MCF 10A (cell line): ENCODE measurements at regions of chr11 and their contacts with region 1.

Region 1: GRCh38 chr11:78645226-78646202 is 70.8 kb upstream of the NARS2 start:
- DNase-seq: peak; percentile 80
- H3K4me3 Mint-ChIP-seq: peak overlapping the region; percentile 52
- H3K27ac Mint-ChIP-seq: no peak overlapping the region
- H3K4me1 Mint-ChIP-seq: peaks cover 8% of the 10 kb centered on the region
- H3K27me3 Mint-ChIP-seq: peaks cover 12% of the 10 kb centered on the region
- CTCF ChIP-seq: peak; percentile 97

Region 2: GRCh38 chr11:78460471-78460870 is 185.0 kb before region 1 on chr11:
- CTCF ChIA-PET with region 1: no interaction called
- POLR2A ChIA-PET with region 1: no interaction called
- intact Hi-C with region 1: no loop called
- DNase-seq: no peak
- H3K4me3 Mint-ChIP-seq: no peak overlapping the region
- H3K27ac Mint-ChIP-seq: no peak overlapping the region
- H3K4me1 Mint-ChIP-seq: no peaks in the 10 kb centered on the region
- H3K27me3 Mint-ChIP-seq: no peaks in the 10 kb centered on the region
- CTCF ChIP-seq: no peak

Region 3: GRCh38 chr11:78715639-78716311 is 70.3 kb after region 1 on chr11:
- CTCF ChIA-PET with region 1: interaction called, 166 read pairs
- POLR2A ChIA-PET with region 1: interaction called, 8 read pairs
- intact Hi-C with region 1: loop called (anchors 1 kb)
- DNase-seq: peak; percentile 78
- H3K4me3 Mint-ChIP-seq: no peak overlapping the region
- H3K27ac Mint-ChIP-seq: no peak overlapping the region
- H3K4me1 Mint-ChIP-seq: peaks cover 12% of the 10 kb centered on the region
- H3K27me3 Mint-ChIP-seq: no peaks in the 10 kb centered on the region
- CTCF ChIP-seq: peak; percentile 82

Region 4: GRCh38 chr11:78840200-78840599 is 194.7 kb after region 1 on chr11:
- CTCF ChIA-PET with region 1: interaction called, 10 read pairs
- POLR2A ChIA-PET with region 1: no interaction called
- intact Hi-C with region 1: no loop called
- DNase-seq: no peak
- H3K4me3 Mint-ChIP-seq: no peak overlapping the region
- H3K27ac Mint-ChIP-seq: no peak overlapping the region
- H3K4me1 Mint-ChIP-seq: peaks cover 14% of the 10 kb centered on the region
- H3K27me3 Mint-ChIP-seq: no peaks in the 10 kb centered on the region
- CTCF ChIP-seq: no peak

Region 5: GRCh38 chr11:79100093-79100910 is 454.8 kb after region 1 on chr11:
- CTCF ChIA-PET with region 1: interaction called, 94 read pairs
- POLR2A ChIA-PET with region 1: interaction called, 6 read pairs
- intact Hi-C with region 1: loop called (anchors 1 kb)
- DNase-seq: peak; percentile 76
- H3K4me3 Mint-ChIP-seq: no peak overlapping the region
- H3K27ac Mint-ChIP-seq: no peak overlapping the region
- H3K4me1 Mint-ChIP-seq: peaks cover 24% of the 10 kb centered on the region
- H3K27me3 Mint-ChIP-seq: no peaks in the 10 kb centered on the region
- CTCF ChIP-seq: peak; percentile 75

Region 6: GRCh38 chr11:79393362-79394043 is 748.0 kb after region 1 on chr11:
- CTCF ChIA-PET with region 1: interaction called, 11 read pairs
- POLR2A ChIA-PET with region 1: no interaction called
- intact Hi-C with region 1: no loop called
- DNase-seq: peak; percentile 56
- H3K4me3 Mint-ChIP-seq: no peak overlapping the region
- H3K27ac Mint-ChIP-seq: no peak overlapping the region
- H3K4me1 Mint-ChIP-seq: peaks cover 18% of the 10 kb centered on the region
- H3K27me3 Mint-ChIP-seq: no peaks in the 10 kb centered on the region
- CTCF ChIP-seq: no peak

Region 7: GRCh38 chr11:80077113-80077512 is 1431.6 kb after region 1 on chr11:
- CTCF ChIA-PET with region 1: no interaction called
- POLR2A ChIA-PET with region 1: no interaction called
- intact Hi-C with region 1: no loop called
- DNase-seq: no peak
- H3K4me3 Mint-ChIP-seq: no peak overlapping the region
- H3K27ac Mint-ChIP-seq: no peak overlapping the region
- H3K4me1 Mint-ChIP-seq: no peaks in the 10 kb centered on the region
- H3K27me3 Mint-ChIP-seq: no peaks in the 10 kb centered on the region
- CTCF ChIP-seq: no peak